ENCODE measurements at regions of chr11 and their contacts with region 1.

Region 1: DNA sequence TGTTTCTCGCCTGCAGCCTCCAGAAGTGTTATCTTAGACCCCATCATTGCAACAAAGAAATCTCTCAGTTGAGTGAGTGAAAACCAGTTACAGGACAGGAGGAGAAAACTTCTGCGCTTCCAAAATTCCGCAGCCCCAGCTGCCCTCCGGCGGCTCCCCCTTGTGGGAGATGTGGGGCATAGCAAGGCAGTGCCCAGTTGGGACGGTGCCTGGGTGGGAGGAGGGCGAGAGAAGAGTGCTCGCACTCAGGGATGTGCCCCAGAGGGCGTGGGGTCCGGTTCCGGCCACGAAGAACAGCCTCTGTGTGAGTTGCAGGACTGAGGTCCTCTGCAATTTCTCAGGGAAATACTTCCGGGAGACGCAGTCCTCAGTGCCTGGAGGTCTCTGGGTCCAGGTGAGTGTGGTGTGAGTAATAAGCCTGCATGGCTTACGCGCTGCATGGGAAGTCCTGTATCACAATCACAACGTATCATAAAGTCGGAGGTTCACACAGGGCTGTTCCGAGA is 87.0 kb upstream of the BLID start:
- DNase-seq: peak; percentile 81
- H3K4me3 Mint-ChIP-seq: peak overlapping the region; percentile 43
- H3K27ac Mint-ChIP-seq: no peak overlapping the region
- H3K4me1 Mint-ChIP-seq: peaks cover 45% of the 10 kb centered on the region
- H3K27me3 Mint-ChIP-seq: no peaks in the 10 kb centered on the region
- CTCF ChIP-seq: peak; percentile 96

Region 2: DNA sequence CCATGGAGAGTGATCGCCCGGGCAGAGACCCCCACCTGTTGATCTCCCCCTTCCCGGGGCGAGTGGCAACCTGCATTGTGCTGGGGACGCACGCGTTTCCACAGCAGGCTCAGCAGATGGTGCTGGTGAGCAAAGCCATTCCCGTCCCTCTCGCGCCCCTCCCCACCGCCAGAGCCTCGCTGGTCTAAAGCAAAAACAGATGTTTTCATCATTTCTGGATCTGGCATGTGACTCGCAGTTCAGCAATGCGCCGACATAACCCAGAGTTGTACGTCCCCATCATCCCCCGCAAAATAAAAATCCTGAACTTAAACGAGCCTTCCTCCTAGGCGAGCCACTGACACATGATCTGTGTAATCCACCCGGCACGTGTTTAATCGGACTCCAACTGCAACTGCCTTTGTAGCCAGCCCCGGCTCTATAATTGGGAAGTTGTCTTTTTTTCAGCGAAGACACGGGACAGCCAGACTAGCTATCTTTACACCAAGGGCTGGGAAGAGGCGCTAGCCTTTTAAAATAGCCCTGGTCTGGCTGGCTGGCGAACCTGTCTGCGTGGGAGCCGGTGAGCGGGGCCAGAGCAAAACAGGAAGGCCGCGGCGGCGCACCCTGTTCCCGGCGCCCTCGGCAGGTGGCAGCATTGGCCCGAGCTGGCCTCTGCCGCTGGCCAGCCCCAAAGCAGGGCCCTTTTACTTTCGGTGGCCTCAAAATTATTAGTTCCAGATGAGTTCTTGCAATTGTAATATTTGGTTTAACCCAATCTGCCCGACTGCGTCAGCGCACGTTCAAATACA is 547.3 kb before region 1 on chr11:
- CTCF ChIA-PET with region 1: interaction called, 83 read pairs
- POLR2A ChIA-PET with region 1: interaction called, 14 read pairs
- intact Hi-C with region 1: loop called (anchors 1 kb)
- DNase-seq: peak; percentile 82
- H3K4me3 Mint-ChIP-seq: peak overlapping the region; percentile 69
- H3K27ac Mint-ChIP-seq: peak overlapping the region; percentile 92
- H3K4me1 Mint-ChIP-seq: peaks cover 24% of the 10 kb centered on the region
- H3K27me3 Mint-ChIP-seq: no peaks in the 10 kb centered on the region
- CTCF ChIP-seq: peak; percentile 92

Region 3: DNA sequence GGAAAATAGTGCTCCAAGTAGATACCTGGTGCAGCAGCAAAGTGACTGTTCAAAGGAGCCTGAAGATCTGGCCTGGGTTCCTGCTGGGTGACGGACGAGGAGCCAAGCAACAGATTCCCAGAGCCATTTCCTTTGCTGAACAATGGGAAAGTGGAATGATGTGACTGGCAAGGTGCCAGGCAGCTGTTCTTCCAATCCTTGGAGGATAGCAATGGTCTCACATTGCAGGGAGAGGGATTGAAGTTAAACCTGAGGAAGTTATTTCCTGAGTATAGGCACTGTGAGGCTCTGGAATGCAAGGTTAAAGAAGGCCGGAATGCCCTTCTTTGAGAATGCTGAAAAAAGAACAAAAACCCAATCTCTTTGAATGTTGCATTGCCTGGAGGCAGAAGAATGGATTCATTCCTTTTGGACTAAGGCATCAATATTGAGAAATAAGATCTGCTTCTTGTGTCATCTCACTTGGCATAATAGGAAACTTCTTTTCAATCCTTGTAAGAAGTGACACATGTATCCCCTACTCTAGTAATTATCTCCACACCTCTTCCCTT is 310.8 kb before region 1 on chr11:
- CTCF ChIA-PET with region 1: interaction called, 3 read pairs
- POLR2A ChIA-PET with region 1: no interaction called
- intact Hi-C with region 1: loop called (anchors 10 kb)
- DNase-seq: peak; percentile 88
- H3K4me3 Mint-ChIP-seq: no peak overlapping the region
- H3K27ac Mint-ChIP-seq: peak overlapping the region; percentile 25
- H3K4me1 Mint-ChIP-seq: peaks cover 67% of the 10 kb centered on the region
- H3K27me3 Mint-ChIP-seq: no peaks in the 10 kb centered on the region
- CTCF ChIP-seq: no peak

Region 4: DNA sequence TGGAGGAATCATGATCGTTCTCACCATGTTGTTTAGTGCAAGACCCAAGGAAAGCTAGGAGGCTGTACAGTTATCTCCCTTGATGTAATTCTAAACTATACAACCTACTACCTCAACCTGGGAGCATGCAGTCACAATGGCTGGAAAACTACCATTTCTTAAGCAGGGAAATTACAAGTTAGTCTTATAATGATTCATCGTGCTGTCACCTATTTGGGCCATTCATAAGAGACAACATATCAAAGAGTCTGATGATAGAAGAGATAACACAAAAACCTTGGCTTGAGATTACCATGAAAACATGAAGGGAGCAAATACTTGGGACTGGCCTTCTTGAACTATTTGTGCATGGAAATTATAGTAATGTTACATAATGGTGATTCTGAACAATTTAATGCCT is 56.5 kb before region 1 on chr11:
- CTCF ChIA-PET with region 1: interaction called, 16 read pairs
- POLR2A ChIA-PET with region 1: no interaction called
- intact Hi-C with region 1: no loop called
- DNase-seq: peak; percentile 46
- H3K4me3 Mint-ChIP-seq: no peak overlapping the region
- H3K27ac Mint-ChIP-seq: peak overlapping the region; percentile 81
- H3K4me1 Mint-ChIP-seq: peaks cover 31% of the 10 kb centered on the region
- H3K27me3 Mint-ChIP-seq: no peaks in the 10 kb centered on the region
- CTCF ChIP-seq: no peak

Region 5: GRCh38 chr11:122167100-122167499 is 35.9 kb before region 1 on chr11:
- CTCF ChIA-PET with region 1: interaction called, 16 read pairs
- POLR2A ChIA-PET with region 1: interaction called, 20 read pairs
- intact Hi-C with region 1: no loop called
- DNase-seq: peak; percentile 84
- H3K4me3 Mint-ChIP-seq: peak overlapping the region; percentile 39
- H3K27ac Mint-ChIP-seq: peak overlapping the region; percentile 96
- H3K4me1 Mint-ChIP-seq: peaks cover 68% of the 10 kb centered on the region
- H3K27me3 Mint-ChIP-seq: no peaks in the 10 kb centered on the region
- CTCF ChIP-seq: no peak

Region 6: DNA sequence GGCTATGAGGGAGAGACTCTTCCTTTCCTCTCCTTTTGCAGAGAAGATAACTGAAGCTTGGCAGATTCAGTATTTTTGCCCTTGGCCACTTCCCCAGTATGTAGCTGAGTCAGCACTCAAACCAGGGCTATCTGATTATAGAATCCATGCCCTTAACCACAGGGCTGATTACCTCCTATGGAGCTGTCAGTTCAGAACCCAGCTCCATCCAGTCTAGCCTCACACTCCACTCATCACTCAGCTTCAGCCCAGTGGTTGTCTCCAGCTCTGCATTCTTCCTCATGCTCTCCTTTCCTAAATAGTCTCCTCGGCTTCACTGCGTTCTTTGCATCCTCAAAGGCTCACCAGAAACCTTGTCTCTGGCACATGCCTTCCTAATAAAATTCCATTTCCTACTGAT is 64.6 kb after region 1 on chr11:
- CTCF ChIA-PET with region 1: no interaction called
- POLR2A ChIA-PET with region 1: no interaction called
- intact Hi-C with region 1: no loop called
- DNase-seq: peak; percentile 32
- H3K4me3 Mint-ChIP-seq: no peak overlapping the region
- H3K27ac Mint-ChIP-seq: no peak overlapping the region
- H3K4me1 Mint-ChIP-seq: peaks cover 7% of the 10 kb centered on the region
- H3K27me3 Mint-ChIP-seq: no peaks in the 10 kb centered on the region
- CTCF ChIP-seq: no peak

Region 7: GRCh38 chr11:122505304-122506006 is 302.5 kb after region 1 on chr11:
- CTCF ChIA-PET with region 1: interaction called, 19 read pairs
- POLR2A ChIA-PET with region 1: no interaction called
- intact Hi-C with region 1: no loop called
- DNase-seq: peak; percentile 81
- H3K4me3 Mint-ChIP-seq: no peak overlapping the region
- H3K27ac Mint-ChIP-seq: no peak overlapping the region
- H3K4me1 Mint-ChIP-seq: peaks cover 6% of the 10 kb centered on the region
- H3K27me3 Mint-ChIP-seq: peaks cover 25% of the 10 kb centered on the region
- CTCF ChIP-seq: peak; percentile 93

Measured in MCF 10A (cell line).